Activated CD4-positive, alpha-beta T cell treated with anti-CD3 and anti-CD28 coated beads for 36 hours (primary cell): ENCODE measurements at regions of chr11 and their contacts with region 1.

Region 1: GRCh38 chr11:44747316-44747715 is 20.6 kb downstream of the TSPAN18 start:
- DNase-seq: no peak
- ATAC-seq: peak; percentile 42
- H3K4me3 Mint-ChIP-seq: no peak overlapping the region
- H3K27ac Mint-ChIP-seq: no peak overlapping the region
- H3K4me1 Mint-ChIP-seq: peaks cover 23% of the 10 kb centered on the region
- H3K27me3 Mint-ChIP-seq: no peaks in the 10 kb centered on the region

Region 2: GRCh38 chr11:44269369-44270351 is 477.7 kb before region 1 on chr11:
- CTCF ChIA-PET with region 1: no interaction called
- POLR2A ChIA-PET with region 1: no interaction called
- intact Hi-C with region 1: no loop called
- DNase-seq: no peak
- ATAC-seq: no peak
- H3K4me3 Mint-ChIP-seq: no peak overlapping the region
- H3K27ac Mint-ChIP-seq: no peak overlapping the region
- H3K4me1 Mint-ChIP-seq: no peaks in the 10 kb centered on the region
- H3K27me3 Mint-ChIP-seq: peaks cover 4% of the 10 kb centered on the region

Region 3: GRCh38 chr11:44775366-44775984 is 28.2 kb after region 1 on chr11:
- CTCF ChIA-PET with region 1: interaction called, 10 read pairs
- POLR2A ChIA-PET with region 1: no interaction called
- intact Hi-C with region 1: no loop called
- DNase-seq: peak; percentile 72
- ATAC-seq: peak; percentile 64
- H3K4me3 Mint-ChIP-seq: no peak overlapping the region
- H3K27ac Mint-ChIP-seq: no peak overlapping the region
- H3K4me1 Mint-ChIP-seq: peaks cover 5% of the 10 kb centered on the region
- H3K27me3 Mint-ChIP-seq: no peaks in the 10 kb centered on the region

Region 4: GRCh38 chr11:44893846-44894617 is 146.7 kb after region 1 on chr11:
- CTCF ChIA-PET with region 1: no interaction called
- POLR2A ChIA-PET with region 1: no interaction called
- intact Hi-C with region 1: no loop called
- DNase-seq: peak; percentile 79
- ATAC-seq: peak; percentile 93
- H3K4me3 Mint-ChIP-seq: no peak overlapping the region
- H3K27ac Mint-ChIP-seq: no peak overlapping the region
- H3K4me1 Mint-ChIP-seq: peaks cover 1% of the 10 kb centered on the region
- H3K27me3 Mint-ChIP-seq: no peaks in the 10 kb centered on the region

Region 5: GRCh38 chr11:45025716-45026492 is 278.6 kb after region 1 on chr11:
- CTCF ChIA-PET with region 1: no interaction called
- POLR2A ChIA-PET with region 1: no interaction called
- intact Hi-C with region 1: no loop called
- DNase-seq: peak; percentile 18
- ATAC-seq: peak; percentile 81
- H3K4me3 Mint-ChIP-seq: no peak overlapping the region
- H3K27ac Mint-ChIP-seq: no peak overlapping the region
- H3K4me1 Mint-ChIP-seq: peaks cover 11% of the 10 kb centered on the region
- H3K27me3 Mint-ChIP-seq: no peaks in the 10 kb centered on the region